ENCODE measurements at regions of chr6 and their contacts with region 1.

Region 1: DNA sequence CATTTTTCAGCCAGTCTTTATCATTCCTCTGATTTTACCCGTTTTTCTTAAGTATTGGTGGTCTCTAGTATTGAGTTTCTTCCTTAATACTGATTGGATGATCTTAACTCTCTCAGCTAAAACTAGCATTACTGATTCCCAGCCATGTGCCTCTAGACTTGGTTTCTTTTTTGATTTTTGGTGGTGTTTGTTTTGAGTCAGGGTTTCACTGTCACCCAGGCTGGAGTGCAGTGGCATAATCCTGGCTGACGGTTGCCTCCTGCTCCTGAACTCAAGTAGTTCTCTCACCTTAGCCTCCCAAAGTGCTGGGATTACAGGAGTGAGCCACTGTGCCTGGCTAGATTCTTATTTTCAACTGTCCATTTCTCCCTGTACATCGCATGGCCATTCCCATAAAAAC is 24.9 kb downstream of the DPPA5 start:
- DNase-seq: no peak
- ATAC-seq: no peak
- H3K4me3 ChIP-seq: no peak overlapping the region
- H3K27ac ChIP-seq: no peak overlapping the region
- H3K4me1 ChIP-seq: no peaks in the 10 kb centered on the region
- CTCF ChIP-seq: no peak
- EP300 ChIP-seq: no peak
- POLR2A ChIP-seq: no peak
- RAD21 ChIP-seq: no peak

Region 2: GRCh38 chr6:73285674-73286283 is 43.4 kb before region 1 on chr6:
- CTCF ChIA-PET with region 1: interaction called, 19 read pairs
- POLR2A ChIA-PET with region 1: no interaction called
- DNase-seq: peak; percentile 47 to 51
- ATAC-seq: peak; percentile 74 to 88; a peak in 5 of 6 replicates
- H3K4me3 ChIP-seq: no peak overlapping the region
- H3K27ac ChIP-seq: no peak overlapping the region
- H3K4me1 ChIP-seq: no peaks in the 10 kb centered on the region
- CTCF ChIP-seq: peak; percentile 41; the same call in 2 of the 3 replicates
- EP300 ChIP-seq: no peak
- POLR2A ChIP-seq: no peak
- RAD21 ChIP-seq: peak; percentile 28 to 46; a peak in 4 of 5 replicates

Region 3: GRCh38 chr6:73309769-73310502 is 19.3 kb before region 1 on chr6:
- CTCF ChIA-PET with region 1: interaction called, 16 read pairs
- POLR2A ChIA-PET with region 1: no interaction called
- DNase-seq: peak; percentile 62 to 67
- ATAC-seq: peak; percentile 96 to 98
- H3K4me3 ChIP-seq: peak overlapping the region; percentile 67
- H3K27ac ChIP-seq: peak overlapping the region; percentile 89 to 96
- H3K4me1 ChIP-seq: peaks cover 7% of the 10 kb centered on the region; the same call in 1 of the 3 replicates
- CTCF ChIP-seq: peak; percentile 69
- EP300 ChIP-seq: no peak
- POLR2A ChIP-seq: peak; percentile 83
- RAD21 ChIP-seq: peak; percentile 10 to 42; a peak in 2 of 5 replicates